ENCODE measurements at regions of chr16 and their contacts with region 1.

Region 1: DNA sequence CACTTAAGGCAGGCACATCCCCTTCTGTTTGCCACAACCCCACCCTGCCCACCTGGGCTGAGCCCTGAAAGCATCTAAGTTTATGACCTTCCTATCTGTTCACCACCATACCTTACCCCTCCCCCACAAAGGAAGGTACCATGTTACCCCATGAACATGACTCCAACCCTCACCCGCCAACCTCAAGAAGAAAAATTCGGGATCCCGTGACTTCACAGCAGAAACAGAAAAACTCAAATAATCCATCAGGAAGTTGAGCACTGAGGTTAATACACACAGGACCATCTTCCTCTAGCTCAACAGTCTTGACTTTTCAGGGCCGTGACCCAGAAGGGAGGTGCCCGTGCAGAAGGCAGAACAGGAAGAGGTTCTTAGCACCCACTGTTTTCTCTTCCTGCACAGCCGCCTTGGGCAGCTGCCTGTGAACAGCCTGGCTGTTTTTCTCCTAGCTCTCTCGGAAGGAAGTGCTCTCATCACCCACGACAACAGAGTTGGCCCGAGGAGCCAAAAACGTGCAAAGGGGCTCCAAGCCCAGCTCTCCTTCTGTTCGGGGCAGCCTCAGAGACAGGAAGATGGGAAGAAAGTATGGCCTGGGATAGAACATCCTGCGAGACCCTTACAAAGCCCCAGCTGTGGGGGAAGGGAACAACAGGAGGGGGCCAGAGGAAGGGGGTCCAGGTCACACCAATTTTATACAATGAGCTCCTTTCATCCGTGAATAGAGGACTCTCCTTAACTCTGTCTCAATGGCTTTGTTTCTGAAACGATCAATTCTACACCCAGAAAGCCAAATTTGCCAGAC is 101.1 kb downstream of the XYLT1 start:
- DNase-seq: peak; percentile 58 to 89 (median 86)
- H3K4me3 ChIP-seq: peak overlapping the region; percentile 72
- H3K4me3 Mint-ChIP-seq: peak overlapping the region; percentile 86 to 92 (median 90)
- H3K27ac ChIP-seq: peak overlapping the region; percentile 79
- H3K27ac Mint-ChIP-seq: peak overlapping the region; percentile 97 to 99 (median 98)
- H3K4me1 ChIP-seq: peaks cover 91% of the 10 kb centered on the region
- H3K4me1 Mint-ChIP-seq: peaks cover 88 to 97% (median 95%) of the 10 kb centered on the region in 3 donors
- H3K27me3 ChIP-seq: no peaks in the 10 kb centered on the region
- H3K27me3 Mint-ChIP-seq: peaks cover 0 to 7% of the 10 kb centered on the region in 2 donors

Region 2: GRCh38 chr16:17070882-17071592 is 298.6 kb before region 1 on chr16:
- CTCF ChIA-PET with region 1: no interaction called
- POLR2A ChIA-PET with region 1: no interaction called
- DNase-seq: peak; percentile 69 to 89 (median 74)
- H3K4me3 ChIP-seq: peak overlapping the region; percentile 50
- H3K4me3 Mint-ChIP-seq: peak overlapping the region; percentile 49 to 92 (median 83)
- H3K27ac ChIP-seq: peak overlapping the region; percentile 35
- H3K27ac Mint-ChIP-seq: peak overlapping the region; percentile 83 to 96 (median 94)
- H3K4me1 ChIP-seq: peaks cover 9% of the 10 kb centered on the region
- H3K4me1 Mint-ChIP-seq: peaks cover 13 to 29% (median 22%) of the 10 kb centered on the region in 3 donors
- H3K27me3 ChIP-seq: no peaks in the 10 kb centered on the region
- H3K27me3 Mint-ChIP-seq: peaks cover 0 to 1% of the 10 kb centered on the region in 2 donors

Region 3: GRCh38 chr16:17296431-17296830 is 73.2 kb before region 1 on chr16:
- CTCF ChIA-PET with region 1: interaction called, 3 read pairs
- POLR2A ChIA-PET with region 1: interaction called, 10 read pairs
- DNase-seq: no peak
- H3K4me3 ChIP-seq: no peak overlapping the region
- H3K4me3 Mint-ChIP-seq: peak overlapping the region in 1 of 7 donors; percentile 62
- H3K27ac ChIP-seq: no peak overlapping the region
- H3K27ac Mint-ChIP-seq: peak overlapping the region in 1 of 8 donors; percentile 19
- H3K4me1 ChIP-seq: no peaks in the 10 kb centered on the region
- H3K4me1 Mint-ChIP-seq: peaks cover 4 to 13% (median 6%) of the 10 kb centered on the region in 3 donors
- H3K27me3 ChIP-seq: no peaks in the 10 kb centered on the region
- H3K27me3 Mint-ChIP-seq: peaks cover 0 to 2% of the 10 kb centered on the region in 2 donors

Region 4: DNA sequence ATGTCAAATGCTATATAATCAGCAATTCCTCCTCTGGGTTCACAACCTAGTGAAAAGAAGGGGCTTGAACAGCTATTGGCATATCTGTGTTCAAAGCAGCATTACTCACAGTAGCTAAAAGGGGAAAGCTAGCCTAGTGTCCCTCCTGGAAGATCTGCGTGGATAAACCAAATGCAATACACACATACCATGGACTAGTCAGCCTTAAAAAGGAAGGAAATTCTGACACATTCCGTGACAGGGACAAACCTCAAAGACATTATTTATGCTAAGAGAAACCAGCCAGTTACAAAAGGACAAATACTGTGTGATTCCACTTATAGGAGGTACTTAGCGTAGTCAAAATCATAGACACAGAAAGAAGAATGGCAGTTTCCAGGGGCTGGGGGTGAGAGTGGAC is 11.0 kb after region 1 on chr16:
- CTCF ChIA-PET with region 1: interaction called, 12 read pairs
- POLR2A ChIA-PET with region 1: interaction called, 13 read pairs
- DNase-seq: no peak
- H3K4me3 ChIP-seq: no peak overlapping the region
- H3K4me3 Mint-ChIP-seq: no peak overlapping the region
- H3K27ac ChIP-seq: no peak overlapping the region
- H3K27ac Mint-ChIP-seq: peak overlapping the region in 3 of 8 donors; percentile 35 to 72 (median 54)
- H3K4me1 ChIP-seq: peaks cover 35% of the 10 kb centered on the region
- H3K4me1 Mint-ChIP-seq: peaks cover 39 to 81% (median 51%) of the 10 kb centered on the region in 3 donors
- H3K27me3 ChIP-seq: no peaks in the 10 kb centered on the region
- H3K27me3 Mint-ChIP-seq: peaks cover 0 to 1% of the 10 kb centered on the region in 2 donors

Region 5: GRCh38 chr16:17397499-17397891 is 27.9 kb after region 1 on chr16:
- CTCF ChIA-PET with region 1: interaction called, 5 read pairs
- POLR2A ChIA-PET with region 1: interaction called, 17 read pairs
- DNase-seq: peak in 3 of 5 donors; percentile 4 to 59 (median 29)
- H3K4me3 ChIP-seq: no peak overlapping the region
- H3K4me3 Mint-ChIP-seq: peak overlapping the region in 6 of 7 donors; percentile 7 to 72 (median 65)
- H3K27ac ChIP-seq: peak overlapping the region; percentile 78
- H3K27ac Mint-ChIP-seq: peak overlapping the region; percentile 87 to 99 (median 97)
- H3K4me1 ChIP-seq: peaks cover 28% of the 10 kb centered on the region
- H3K4me1 Mint-ChIP-seq: peaks cover 41 to 81% (median 62%) of the 10 kb centered on the region in 3 donors
- H3K27me3 ChIP-seq: no peaks in the 10 kb centered on the region
- H3K27me3 Mint-ChIP-seq: no peaks in the 10 kb centered on the region

Region 6: GRCh38 chr16:17416461-17417311 is 47.1 kb after region 1 on chr16:
- CTCF ChIA-PET with region 1: interaction called, 15 read pairs
- POLR2A ChIA-PET with region 1: interaction called, 6 read pairs
- DNase-seq: peak in 4 of 5 donors; percentile 12 to 65 (median 53)
- H3K4me3 ChIP-seq: peak overlapping the region; percentile 38
- H3K4me3 Mint-ChIP-seq: peak overlapping the region; percentile 38 to 92 (median 84)
- H3K27ac ChIP-seq: peak overlapping the region; percentile 12
- H3K27ac Mint-ChIP-seq: peak overlapping the region; percentile 43 to 96 (median 91)
- H3K4me1 ChIP-seq: peaks cover 20% of the 10 kb centered on the region
- H3K4me1 Mint-ChIP-seq: peaks cover 44 to 63% (median 48%) of the 10 kb centered on the region in 3 donors
- H3K27me3 ChIP-seq: no peaks in the 10 kb centered on the region
- H3K27me3 Mint-ChIP-seq: no peaks in the 10 kb centered on the region

Region 7: GRCh38 chr16:17524656-17525055 is 155.0 kb after region 1 on chr16:
- CTCF ChIA-PET with region 1: no interaction called
- POLR2A ChIA-PET with region 1: no interaction called
- DNase-seq: no peak
- H3K4me3 ChIP-seq: no peak overlapping the region
- H3K4me3 Mint-ChIP-seq: no peak overlapping the region
- H3K27ac ChIP-seq: no peak overlapping the region
- H3K27ac Mint-ChIP-seq: no peak overlapping the region
- H3K4me1 ChIP-seq: no peaks in the 10 kb centered on the region
- H3K4me1 Mint-ChIP-seq: peaks cover 5 to 18% (median 6%) of the 10 kb centered on the region in 3 donors
- H3K27me3 ChIP-seq: no peaks in the 10 kb centered on the region
- H3K27me3 Mint-ChIP-seq: peaks cover 3 to 6% of the 10 kb centered on the region in 2 donors